ENCODE measurements at regions of chr1 and their contacts with region 1.

Region 1: GRCh38 chr1:6171548-6172119 is 8.5 kb downstream of the CHD5 start:
- DNase-seq: no peak
- ATAC-seq: peak in 1 of 2 donors; percentile 7

Region 2: GRCh38 chr1:6052543-6053205 is 119.0 kb before region 1 on chr1:
- intact Hi-C with region 1: loop called in 1 of 2 experiments (anchors 10 kb)
- DNase-seq: peak; percentile 69
- ATAC-seq: peak; percentile 44 to 79

Measured in left cardiac atrium (tissue), 4 donors.